ENCODE measurements at regions of chr16 and their contacts with region 1.

Region 1: DNA sequence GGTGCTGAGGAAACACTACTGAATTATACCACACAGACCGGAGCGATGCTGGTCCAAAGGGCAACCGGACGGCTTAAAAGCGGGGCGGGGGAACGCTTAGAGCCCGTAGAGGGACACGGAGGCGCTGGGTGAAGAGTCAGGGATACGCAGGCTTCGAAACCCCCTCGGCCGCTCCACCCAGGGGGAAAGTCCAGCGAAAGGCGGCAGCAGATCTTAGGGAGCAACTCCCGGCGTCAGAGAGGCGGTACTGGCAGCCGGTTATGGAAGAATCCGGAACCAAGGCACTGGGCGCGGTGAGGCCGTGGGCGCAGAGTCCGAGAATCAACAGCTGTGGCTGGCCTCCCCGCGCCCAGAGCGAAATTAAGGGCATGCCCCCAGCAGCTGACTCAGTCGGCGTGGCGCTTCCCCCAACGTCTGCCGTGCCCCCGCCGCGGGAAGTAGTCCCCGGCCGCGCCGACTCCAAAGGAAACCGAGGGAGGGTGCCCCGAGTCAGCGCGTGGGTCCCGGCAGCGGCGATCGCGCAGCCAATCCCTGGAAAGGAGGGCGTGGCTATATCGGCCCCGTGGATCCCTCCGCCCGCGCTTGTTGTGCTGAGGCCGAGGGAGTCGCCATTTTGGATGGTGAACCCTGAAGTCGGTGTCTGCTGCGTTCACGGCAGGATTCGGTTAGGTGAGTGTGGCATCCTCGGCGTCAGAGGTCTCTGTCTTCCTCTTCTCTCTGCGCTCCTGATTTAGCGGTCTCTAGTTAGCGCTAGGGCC is at the start of gene IST1:
- DNase-seq: peak; percentile 96
- ATAC-seq: peak; percentile 91
- H3K4me3 ChIP-seq: peak within 1 kb of the TSS; percentile 85 to 98 (median 95)
- H3K27ac ChIP-seq: peak within 1 kb of the TSS; percentile 95
- H3K4me1 ChIP-seq: peaks cover 57% of the 10 kb centered on the region
- H3K27me3 ChIP-seq: no peaks in the 10 kb centered on the region; a peak in 1 of 5 replicates
- CTCF ChIP-seq: peak; percentile 23; the same call in 1 of the 2 replicates
- EP300 ChIP-seq: peak; percentile 27 to 54; a peak in 3 of 4 replicates
- POLR2A ChIP-seq: peak; percentile 94 to 95
- RAD21 ChIP-seq: peak; percentile 59
- total RNA-seq, gene IST1: 346 and 497 TPM in 2 replicates

Region 2: GRCh38 chr16:71883849-71884638 is 11.1 kb before region 1 on chr16 and contains the start of gene ZNF821:
- CTCF ChIA-PET with region 1: interaction called, 3 read pairs
- POLR2A ChIA-PET with region 1: interaction called, 59 read pairs
- in situ Hi-C with region 1: no loop called
- intact Hi-C with region 1: no loop called
- DNase-seq: peak; percentile 66
- ATAC-seq: peak; percentile 85
- H3K4me3 ChIP-seq: peak within 1 kb of the TSS; percentile 77 to 99 (median 95)
- H3K27ac ChIP-seq: peak within 1 kb of the TSS; percentile 73
- H3K4me1 ChIP-seq: peaks cover 28% of the 10 kb centered on the region
- H3K27me3 ChIP-seq: no peaks in the 10 kb centered on the region
- CTCF ChIP-seq: peak; percentile 62
- EP300 ChIP-seq: no peak
- POLR2A ChIP-seq: peak in 1 of 2 experiments; percentile 56; a peak in 3 of 4 replicates
- RAD21 ChIP-seq: peak; percentile 90
- total RNA-seq, gene ZNF821: 6.0 and 7.0 TPM in 2 replicates

Region 3: DNA sequence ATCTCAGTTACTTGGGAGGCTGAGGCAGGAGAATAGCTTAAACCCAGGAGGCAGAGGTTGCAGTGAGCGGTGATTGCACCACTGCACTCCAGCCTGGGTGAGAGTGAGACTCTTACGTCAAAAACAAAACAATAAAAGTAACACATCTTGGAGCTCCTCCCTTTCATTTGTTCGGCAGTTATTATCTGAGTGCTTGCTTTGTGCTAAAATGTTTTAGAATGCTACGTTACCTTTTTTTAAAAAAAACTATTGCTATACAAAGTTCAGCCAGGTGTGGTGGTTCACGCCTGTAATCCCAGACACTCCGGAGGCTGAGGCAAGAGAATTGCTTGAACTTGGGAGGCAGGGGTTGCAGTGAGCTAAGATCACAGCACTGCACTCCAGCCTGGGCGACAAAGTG is 16.0 kb after region 1 on chr16:
- CTCF ChIA-PET with region 1: no interaction called
- POLR2A ChIA-PET with region 1: interaction called, 9 read pairs
- in situ Hi-C with region 1: no loop called
- intact Hi-C with region 1: loop called (anchors 1 kb)
- DNase-seq: no peak
- ATAC-seq: peak; percentile 47; the same call in 2 of the 3 replicates
- H3K4me3 ChIP-seq: no peak overlapping the region
- H3K27ac ChIP-seq: no peak overlapping the region
- H3K4me1 ChIP-seq: peaks cover 76% of the 10 kb centered on the region
- H3K27me3 ChIP-seq: no peaks in the 10 kb centered on the region
- CTCF ChIP-seq: no peak
- EP300 ChIP-seq: no peak
- POLR2A ChIP-seq: no peak
- RAD21 ChIP-seq: no peak

Region 4: DNA sequence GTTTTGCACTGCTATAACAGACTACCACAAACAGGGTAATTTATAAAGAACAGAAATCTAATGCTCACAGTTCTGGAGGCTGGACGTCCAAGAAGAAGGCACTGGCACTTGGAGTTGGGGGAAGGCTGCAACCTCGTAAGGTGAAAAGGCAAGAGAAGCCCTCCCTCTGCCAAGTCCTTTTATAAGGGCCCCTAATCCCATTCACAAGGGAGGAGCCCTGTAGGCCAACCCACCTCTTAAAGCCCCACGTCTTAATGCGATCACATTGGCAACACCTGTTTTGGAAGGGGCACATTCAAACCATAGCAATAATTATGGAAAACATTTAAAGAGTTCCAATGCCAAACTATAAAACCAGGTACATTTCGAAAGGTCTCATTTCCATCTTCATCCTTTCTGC is 99.9 kb after region 1 on chr16:
- CTCF ChIA-PET with region 1: no interaction called
- POLR2A ChIA-PET with region 1: no interaction called
- in situ Hi-C with region 1: no loop called
- intact Hi-C with region 1: no loop called
- DNase-seq: no peak
- ATAC-seq: no peak
- H3K4me3 ChIP-seq: no peak overlapping the region
- H3K27ac ChIP-seq: no peak overlapping the region
- H3K4me1 ChIP-seq: peaks cover 8% of the 10 kb centered on the region
- H3K27me3 ChIP-seq: peaks cover 0 to 1% of the 10 kb centered on the region in 2 experiments; a peak in 1 of 5 replicates
- CTCF ChIP-seq: no peak
- EP300 ChIP-seq: no peak
- POLR2A ChIP-seq: no peak
- RAD21 ChIP-seq: no peak

Region 5: GRCh38 chr16:72008424-72009216 is 113.5 kb after region 1 on chr16 and contains the start of gene DHODH:
- CTCF ChIA-PET with region 1: no interaction called
- POLR2A ChIA-PET with region 1: no interaction called
- in situ Hi-C with region 1: no loop called
- intact Hi-C with region 1: loop called (anchors 1 kb)
- DNase-seq: peak; percentile 99
- ATAC-seq: peak; percentile 99
- H3K4me3 ChIP-seq: peak within 1 kb of the TSS; percentile 91 to 100 (median 97)
- H3K27ac ChIP-seq: peak within 1 kb of the TSS; percentile 87
- H3K4me1 ChIP-seq: peaks cover 41% of the 10 kb centered on the region
- H3K27me3 ChIP-seq: no peaks in the 10 kb centered on the region; a peak in 1 of 5 replicates
- CTCF ChIP-seq: peak; percentile 48
- EP300 ChIP-seq: no peak
- POLR2A ChIP-seq: peak; percentile 98
- RAD21 ChIP-seq: peak; percentile 42
- total RNA-seq, gene DHODH: 12.7 and 16.4 TPM in 2 replicates

Measured in HepG2 (cell line).